K562 (cell line): ENCODE measurements at regions of chr9 and their contacts with region 1.

Region 1: GRCh38 chr9:120830151-120830550 is 12.6 kb downstream of the PSMD5 start:
- DNase-seq: peak in 1 of 4 experiments; percentile 15
- ATAC-seq: no peak
- H3K4me3 ChIP-seq: no peak overlapping the region
- H3K27ac ChIP-seq: no peak overlapping the region
- H3K4me1 ChIP-seq: no peaks in the 10 kb centered on the region
- H3K27me3 ChIP-seq: no peaks in the 10 kb centered on the region
- CTCF ChIP-seq: no peak
- EP300 ChIP-seq: no peak
- POLR2A ChIP-seq: no peak
- RAD21 ChIP-seq: no peak

Region 2: DNA sequence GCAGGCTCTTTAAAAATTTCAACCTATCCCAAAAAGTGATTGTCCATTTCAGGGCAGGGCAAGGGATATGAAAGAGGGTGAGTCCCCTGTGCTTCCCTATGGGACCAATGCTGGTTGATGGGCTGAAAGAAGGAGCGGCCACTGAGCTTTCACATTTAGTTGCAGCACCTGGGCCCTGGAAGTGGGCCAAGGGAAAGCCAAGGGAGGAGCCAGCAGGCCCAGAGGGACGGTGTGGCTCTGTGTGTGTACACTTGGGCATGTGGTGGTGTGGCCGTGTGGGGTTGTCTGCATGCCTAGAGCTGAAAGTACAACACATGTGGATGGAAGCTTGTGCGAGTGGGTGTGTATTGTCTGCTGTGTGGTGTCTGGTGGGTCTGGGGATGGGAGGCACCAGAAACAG is 26.5 kb after region 1 on chr9:
- CTCF ChIA-PET with region 1: no interaction called
- POLR2A ChIA-PET with region 1: interaction called, 11 read pairs
- in situ Hi-C with region 1: no loop called
- intact Hi-C with region 1: no loop called
- DNase-seq: no peak
- ATAC-seq: peak; percentile 10
- H3K4me3 ChIP-seq: no peak overlapping the region
- H3K27ac ChIP-seq: no peak overlapping the region
- H3K4me1 ChIP-seq: peaks cover 0 to 7% of the 10 kb centered on the region in 2 experiments; a peak in 1 of 5 replicates
- H3K27me3 ChIP-seq: no peaks in the 10 kb centered on the region
- CTCF ChIP-seq: no peak
- EP300 ChIP-seq: no peak
- POLR2A ChIP-seq: no peak
- RAD21 ChIP-seq: no peak